Ascending aorta (tissue), 2 donors: ENCODE measurements at regions of chr15 and their contacts with region 1.

Region 1: GRCh38 chr15:81323944-81324881 is at the start of gene STARD5:
- DNase-seq: peak; percentile 96 to 100
- H3K4me3 ChIP-seq: peak within 1 kb of the TSS; percentile 68 to 76
- H3K27ac ChIP-seq: peak within 1 kb of the TSS; percentile 49 to 71
- H3K4me1 ChIP-seq: peaks cover 5 to 7% of the 10 kb centered on the region in 2 donors
- H3K27me3 ChIP-seq: no peaks in the 10 kb centered on the region
- CTCF ChIP-seq: no peak
- total RNA-seq, gene STARD5: 4.8 TPM

Region 2: GRCh38 chr15:81312790-81313543 is 11.2 kb before region 1 on chr15:
- intact Hi-C with region 1: loop called (anchors 1 kb)
- DNase-seq: peak; percentile 75 to 95
- H3K4me3 ChIP-seq: no peak overlapping the region
- H3K27ac ChIP-seq: peak overlapping the region; percentile 55 to 69
- H3K4me1 ChIP-seq: peaks cover 12 to 18% of the 10 kb centered on the region in 2 donors
- H3K27me3 ChIP-seq: no peaks in the 10 kb centered on the region
- CTCF ChIP-seq: no peak

Region 3: DNA sequence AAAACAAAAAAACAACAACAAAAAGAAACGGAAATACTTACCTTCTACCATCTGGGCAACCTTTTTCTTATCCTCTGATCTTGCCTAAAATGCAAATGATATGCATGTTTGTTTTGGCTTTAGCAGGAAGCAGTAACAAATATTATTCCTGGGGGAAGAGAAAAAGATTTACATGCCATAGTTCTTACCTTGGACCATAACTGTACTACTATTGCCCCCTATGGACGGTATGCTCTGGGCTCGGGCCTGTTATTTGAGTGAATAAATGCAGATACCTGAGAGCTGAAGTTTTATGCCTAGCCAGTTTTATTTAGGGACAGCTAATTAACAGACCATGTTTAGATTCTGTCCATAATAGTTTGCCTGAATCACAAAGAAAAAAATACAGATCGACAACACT is 12.4 kb after region 1 on chr15:
- intact Hi-C with region 1: loop called (anchors 1 kb)
- DNase-seq: no peak
- H3K4me3 ChIP-seq: no peak overlapping the region
- H3K27ac ChIP-seq: no peak overlapping the region
- H3K4me1 ChIP-seq: peaks cover 14% of the 10 kb centered on the region in 2 donors
- H3K27me3 ChIP-seq: no peaks in the 10 kb centered on the region
- CTCF ChIP-seq: peak in 1 of 3 experiments; percentile 12

Region 4: DNA sequence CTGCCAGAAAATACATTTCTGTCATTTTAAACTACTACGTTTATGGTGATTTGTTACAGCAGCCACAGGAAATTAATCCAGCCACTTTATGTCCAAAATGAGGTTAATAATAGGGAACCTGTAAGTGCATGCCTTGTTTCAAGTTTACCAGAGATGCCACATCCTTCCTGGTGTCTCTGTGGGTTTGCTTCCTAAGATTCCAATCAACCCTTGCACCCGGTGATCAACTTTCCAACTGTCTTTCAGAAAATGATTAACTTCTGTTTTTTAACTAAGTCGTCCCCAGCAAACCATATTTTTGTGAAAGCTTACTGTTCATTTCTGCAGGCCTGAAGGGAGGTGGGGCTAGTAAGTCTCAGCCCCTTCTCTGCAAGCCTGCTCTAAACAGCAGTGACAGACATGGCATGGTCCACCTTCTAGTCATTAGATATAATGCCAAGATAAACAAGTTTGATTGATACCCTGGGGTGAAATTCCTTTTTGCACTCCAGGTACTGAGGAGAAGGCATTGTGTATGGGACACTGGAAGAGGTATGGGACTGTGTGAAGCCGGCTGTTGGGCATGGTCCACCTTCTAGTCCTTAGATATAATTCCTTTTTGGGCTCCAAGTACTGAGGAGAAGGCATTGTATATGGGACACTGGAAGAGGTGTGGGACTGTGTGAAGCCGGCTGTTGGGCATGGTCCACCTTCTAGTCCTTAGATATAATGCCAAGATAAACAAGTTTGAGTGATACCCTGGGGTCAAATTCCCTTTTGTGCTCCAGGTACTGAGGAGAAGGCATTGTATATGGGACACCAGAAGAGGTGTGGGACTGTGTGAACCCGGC is 60.9 kb after region 1 on chr15:
- intact Hi-C with region 1: no loop called
- DNase-seq: no peak
- H3K4me3 ChIP-seq: no peak overlapping the region
- H3K27ac ChIP-seq: no peak overlapping the region
- H3K4me1 ChIP-seq: no peaks in the 10 kb centered on the region
- H3K27me3 ChIP-seq: no peaks in the 10 kb centered on the region
- CTCF ChIP-seq: no peak

Region 5: DNA sequence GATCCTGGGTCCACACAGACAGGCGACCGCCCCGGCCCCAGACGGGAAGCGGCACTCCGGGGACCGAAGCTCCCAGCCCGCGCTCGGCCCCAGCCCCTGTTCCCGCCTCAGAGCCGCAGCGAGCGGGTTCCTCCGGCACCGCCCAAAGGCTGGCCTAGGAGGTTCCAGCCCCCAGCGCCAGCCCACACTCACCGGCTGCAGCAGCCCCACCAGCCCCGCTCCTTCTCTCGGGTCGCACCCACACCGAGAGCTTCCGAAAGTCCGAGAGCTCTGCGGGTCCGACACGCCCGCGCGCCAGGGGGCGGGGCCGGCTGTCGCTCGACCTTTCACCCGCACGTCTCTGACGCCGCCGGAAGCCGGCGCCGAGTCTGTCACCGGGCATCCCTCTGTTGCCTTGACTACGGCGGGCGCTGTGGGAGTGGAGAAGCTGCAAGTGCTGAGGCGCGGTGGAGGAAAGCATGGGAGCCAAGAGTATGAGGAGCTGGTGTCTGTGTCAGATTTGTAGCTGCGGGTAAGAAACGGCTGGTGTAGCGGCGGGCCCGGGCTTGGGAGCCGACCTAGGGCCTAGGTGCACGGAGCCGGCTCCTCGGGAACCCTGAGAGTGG is 938.3 kb after region 1 on chr15 and contains the starts of genes EFL1 and SAXO2:
- intact Hi-C with region 1: loop called (anchors 5 kb)
- DNase-seq: peak; percentile 77 to 96
- H3K4me3 ChIP-seq: peak within 1 kb of the TSS; percentile 82 to 89
- H3K27ac ChIP-seq: peak within 1 kb of the TSS; percentile 68 to 71
- H3K4me1 ChIP-seq: peaks cover 2 to 18% of the 10 kb centered on the region in 2 donors
- H3K27me3 ChIP-seq: no peaks in the 10 kb centered on the region
- CTCF ChIP-seq: no peak
- total RNA-seq, gene EFL1: 17.3 TPM
- total RNA-seq, gene SAXO2: not detected